ENCODE measurements at regions of chr4 and their contacts with region 1.

Region 1: GRCh38 chr4:174222266-174222872 is 61.1 kb downstream of the FBXO8 start:
- DNase-seq: no peak
- CTCF ChIP-seq: peak; percentile 61

Region 2: GRCh38 chr4:173505924-173506518 is 716.3 kb before region 1 on chr4:
- in situ Hi-C with region 1: loop called (anchors 25 kb)
- DNase-seq: peak; percentile 88
- CTCF ChIP-seq: peak; percentile 84

Region 3: DNA sequence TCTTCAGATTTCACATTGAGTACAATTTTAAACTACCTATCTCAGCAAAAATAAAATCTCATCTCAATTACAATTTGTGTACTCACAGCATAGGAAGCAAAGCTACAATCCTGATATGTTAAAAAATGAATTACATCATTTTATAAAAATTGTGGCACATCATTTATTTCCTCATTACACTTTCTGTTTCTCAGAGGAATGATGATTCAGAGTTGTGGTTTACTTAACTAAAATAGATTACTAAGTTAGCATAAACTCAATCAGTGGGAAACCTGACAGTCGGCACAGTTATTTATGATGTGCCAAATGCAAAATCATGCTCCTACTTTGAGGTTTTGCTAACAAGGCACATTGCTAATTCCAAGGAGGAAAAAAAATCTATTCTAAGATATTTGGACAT is 263.9 kb before region 1 on chr4:
- in situ Hi-C with region 1: no loop called
- DNase-seq: no peak
- CTCF ChIP-seq: no peak

Region 4: GRCh38 chr4:173990126-173990868 is 232.1 kb before region 1 on chr4:
- in situ Hi-C with region 1: no loop called
- DNase-seq: no peak
- CTCF ChIP-seq: peak; percentile 37

Region 5: DNA sequence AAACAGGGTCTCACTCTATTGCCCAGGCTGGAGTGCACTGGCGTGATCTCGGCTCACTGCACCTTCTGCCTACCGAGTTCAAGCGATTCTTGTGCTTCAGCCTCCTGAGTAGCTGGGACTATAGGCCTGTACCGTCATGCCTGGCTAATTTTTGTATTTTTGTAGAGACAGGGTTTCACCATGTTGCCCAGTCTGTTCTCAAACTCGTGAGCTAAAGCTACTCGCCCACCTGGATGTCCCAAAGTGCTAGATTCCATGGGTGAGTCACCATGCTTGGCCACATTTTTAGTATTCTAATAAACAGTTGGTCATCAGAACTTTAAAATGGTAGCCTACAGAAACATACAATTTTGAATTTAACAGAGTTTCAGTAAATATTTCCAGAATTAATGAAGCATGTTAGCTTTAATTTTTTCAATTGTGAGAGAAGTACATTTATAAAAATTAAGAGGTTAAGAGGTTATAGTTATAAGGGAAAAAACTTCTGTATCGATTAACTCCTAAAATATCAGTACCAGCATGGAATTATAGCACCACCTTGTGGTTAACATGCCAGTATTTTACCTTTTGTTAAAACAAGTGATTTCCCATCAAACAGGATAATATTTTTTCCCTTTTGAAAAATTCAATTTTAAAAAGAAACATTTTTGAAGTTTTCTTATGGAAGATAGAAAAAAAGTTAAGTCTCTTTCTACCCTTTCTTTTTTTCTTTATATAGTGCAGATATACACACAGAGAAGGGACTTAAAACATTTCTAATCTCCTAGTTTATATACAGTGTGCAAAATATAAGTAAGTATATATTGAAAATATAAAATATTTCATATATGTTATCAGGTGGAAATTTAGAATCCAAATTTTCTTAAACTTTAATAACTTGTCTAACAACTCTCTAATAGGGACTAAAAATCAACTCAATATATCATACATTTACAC is 96.7 kb after region 1 on chr4:
- in situ Hi-C with region 1: loop called (anchors 10 kb)
- DNase-seq: peak; percentile 24
- CTCF ChIP-seq: peak; percentile 65

Region 6: DNA sequence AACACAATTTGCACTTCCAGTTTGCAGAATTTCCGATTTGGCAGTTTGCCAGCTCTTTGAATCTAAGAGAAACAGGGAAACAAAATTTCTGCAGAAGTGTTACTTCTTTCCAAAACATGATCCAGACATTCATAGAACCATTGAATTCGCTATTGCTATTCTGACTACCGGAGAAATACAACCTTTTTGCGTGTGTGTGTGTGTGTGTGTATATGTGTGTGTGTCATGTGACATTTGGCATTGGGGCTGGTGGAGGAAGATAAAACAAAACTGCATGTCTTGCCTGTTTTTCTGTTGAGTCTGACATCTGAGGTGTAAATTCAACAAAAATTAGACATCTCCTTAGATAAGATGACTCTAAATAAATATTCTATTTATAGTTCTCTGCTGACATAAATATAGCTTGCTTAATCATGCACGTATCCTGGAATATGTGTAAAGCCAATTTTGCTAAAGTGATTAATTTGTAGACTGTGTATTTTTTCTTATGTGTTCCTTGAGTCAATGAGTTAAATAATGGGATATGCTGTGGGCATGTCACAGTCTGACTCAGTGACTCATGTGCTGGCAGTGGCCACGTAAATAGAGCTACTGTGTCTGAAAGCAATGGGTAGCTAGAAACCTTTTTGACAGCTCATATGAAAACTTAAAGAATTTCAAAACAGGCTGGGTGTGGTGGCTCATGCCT is 201.0 kb after region 1 on chr4:
- in situ Hi-C with region 1: no loop called
- DNase-seq: no peak
- CTCF ChIP-seq: no peak